Endothelial cell of umbilical vein (primary cell): ENCODE measurements at regions of chr7 and their contacts with region 1.

Region 1: DNA sequence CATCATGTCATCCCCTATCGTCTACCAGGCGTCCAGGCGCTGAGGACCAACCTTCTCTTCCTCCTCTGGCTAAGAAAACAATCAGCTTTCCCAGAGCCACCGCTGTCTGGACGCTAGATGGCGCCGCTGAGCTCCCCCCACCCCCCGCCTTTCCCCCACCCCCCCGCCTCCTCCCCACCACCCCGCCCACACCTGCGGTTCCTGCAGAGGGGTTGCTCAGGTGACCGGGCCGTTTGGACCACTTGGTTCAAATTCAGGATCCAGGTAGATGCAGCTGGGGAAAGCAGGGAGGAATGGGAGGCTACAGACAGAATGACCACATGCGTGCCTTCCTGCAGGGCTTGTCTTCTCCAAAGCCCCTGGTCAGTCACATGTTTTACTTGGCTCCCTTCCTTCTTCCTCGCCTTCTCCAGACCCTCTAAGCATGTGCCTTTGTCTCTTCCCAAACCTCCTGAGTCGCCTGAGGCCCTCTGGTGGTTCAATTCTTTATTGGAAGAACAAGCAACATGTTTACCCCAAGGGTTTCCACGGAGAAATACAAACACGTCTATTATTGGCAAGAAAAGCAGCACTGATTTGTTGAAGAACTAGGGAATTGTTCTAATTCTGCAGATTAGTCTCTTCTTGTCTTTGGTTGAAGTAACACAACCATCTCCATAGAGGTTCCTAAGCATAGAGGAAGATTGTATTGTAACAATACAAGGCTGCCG is 24.7 kb downstream of the AOC1 start:
- DNase-seq: peak; percentile 89
- H3K4me3 ChIP-seq: no peak overlapping the region
- H3K27ac ChIP-seq: no peak overlapping the region
- H3K4me1 ChIP-seq: peaks cover 10% of the 10 kb centered on the region
- H3K27me3 ChIP-seq: peaks cover 8 to 50% of the 10 kb centered on the region in 2 experiments
- CTCF ChIP-seq: peak; percentile 46 to 63
- POLR2A ChIP-seq: no peak

Region 2: DNA sequence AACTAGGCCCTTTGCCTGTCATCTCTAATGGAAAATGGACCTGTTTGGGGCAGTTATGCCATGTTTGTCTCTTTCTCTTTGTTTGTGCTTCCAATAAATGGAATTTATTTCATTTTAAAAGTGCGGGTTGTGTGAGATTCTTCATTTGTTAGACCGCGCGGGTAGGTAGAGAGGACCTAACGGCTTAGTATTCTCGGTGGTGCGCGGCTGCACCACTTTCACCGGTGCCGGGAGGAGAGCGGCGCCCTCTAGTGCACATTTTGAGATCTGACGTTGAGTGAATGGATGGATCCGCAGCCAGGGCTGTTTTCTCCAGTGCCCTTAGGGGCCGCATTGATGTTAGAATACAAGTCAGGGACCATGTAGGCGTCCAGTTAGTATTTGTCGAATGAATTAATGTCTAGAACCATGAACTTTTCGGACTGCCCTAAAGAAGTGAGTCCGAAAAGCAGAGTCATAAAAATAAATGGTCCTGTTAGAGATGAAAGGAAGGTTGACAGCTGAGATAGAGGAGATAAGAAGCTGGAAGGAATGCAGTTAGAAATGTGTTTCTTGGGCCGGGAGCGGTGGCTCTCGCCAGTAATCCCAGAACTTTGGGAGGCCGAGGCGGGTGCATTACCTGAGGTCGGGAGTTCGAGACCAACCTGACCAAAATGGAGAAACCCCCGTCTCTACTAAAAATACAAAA is 455.8 kb before region 1 on chr7:
- CTCF ChIA-PET with region 1: no interaction called
- POLR2A ChIA-PET with region 1: no interaction called
- dilution Hi-C with region 1: no loop called
- intact Hi-C with region 1: loop called (anchors 1 kb)
- DNase-seq: peak; percentile 80
- H3K4me3 ChIP-seq: no peak overlapping the region
- H3K27ac ChIP-seq: no peak overlapping the region
- H3K4me1 ChIP-seq: no peaks in the 10 kb centered on the region
- H3K27me3 ChIP-seq: no peaks in the 10 kb centered on the region
- CTCF ChIP-seq: peak; percentile 80 to 81
- POLR2A ChIP-seq: no peak

Region 3: GRCh38 chr7:150778738-150779301 is 98.2 kb before region 1 on chr7:
- CTCF ChIA-PET with region 1: interaction called, 10 read pairs
- POLR2A ChIA-PET with region 1: no interaction called
- dilution Hi-C with region 1: no loop called
- intact Hi-C with region 1: loop called (anchors 1 kb)
- DNase-seq: peak; percentile 80
- H3K4me3 ChIP-seq: no peak overlapping the region
- H3K27ac ChIP-seq: no peak overlapping the region
- H3K4me1 ChIP-seq: no peaks in the 10 kb centered on the region
- H3K27me3 ChIP-seq: peaks cover 12 to 13% of the 10 kb centered on the region in 2 experiments
- CTCF ChIP-seq: peak; percentile 80 to 90
- POLR2A ChIP-seq: no peak

Region 4: GRCh38 chr7:150860291-150860977 is 16.5 kb before region 1 on chr7:
- CTCF ChIA-PET with region 1: interaction called, 12 read pairs
- POLR2A ChIA-PET with region 1: no interaction called
- dilution Hi-C with region 1: no loop called
- intact Hi-C with region 1: no loop called
- DNase-seq: no peak
- H3K4me3 ChIP-seq: no peak overlapping the region
- H3K27ac ChIP-seq: no peak overlapping the region
- H3K4me1 ChIP-seq: no peaks in the 10 kb centered on the region
- H3K27me3 ChIP-seq: no peaks in the 10 kb centered on the region
- CTCF ChIP-seq: no peak
- POLR2A ChIP-seq: no peak

Region 5: DNA sequence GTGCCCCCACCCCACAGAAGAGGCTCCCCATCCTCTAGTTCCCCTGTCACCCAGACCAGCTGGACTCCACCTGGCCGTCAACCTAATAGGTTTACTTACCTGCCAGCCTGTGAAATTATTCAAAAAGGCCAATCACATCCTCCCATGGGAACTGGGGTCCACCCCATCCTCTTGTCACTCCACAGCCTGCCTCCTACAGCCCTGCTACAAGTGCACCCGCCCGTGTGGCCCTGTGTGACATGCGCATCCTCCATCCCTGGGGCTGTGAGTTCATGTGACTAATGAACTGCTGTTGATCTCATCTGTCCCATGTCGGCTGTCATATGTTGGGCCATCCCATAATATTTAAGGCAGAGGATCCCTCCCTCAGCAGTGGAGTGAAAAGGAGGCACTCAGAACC is 14.8 kb after region 1 on chr7:
- CTCF ChIA-PET with region 1: interaction called, 11 read pairs
- POLR2A ChIA-PET with region 1: no interaction called
- dilution Hi-C with region 1: no loop called
- intact Hi-C with region 1: no loop called
- DNase-seq: no peak
- H3K4me3 ChIP-seq: no peak overlapping the region
- H3K27ac ChIP-seq: no peak overlapping the region
- H3K4me1 ChIP-seq: no peaks in the 10 kb centered on the region
- H3K27me3 ChIP-seq: peaks cover 3 to 6% of the 10 kb centered on the region in 2 experiments
- CTCF ChIP-seq: no peak
- POLR2A ChIP-seq: no peak

Region 6: GRCh38 chr7:151408839-151409666 is 532.1 kb after region 1 on chr7:
- CTCF ChIA-PET with region 1: no interaction called
- POLR2A ChIA-PET with region 1: no interaction called
- dilution Hi-C with region 1: no loop called
- intact Hi-C with region 1: no loop called
- DNase-seq: no peak
- H3K4me3 ChIP-seq: no peak overlapping the region
- H3K27ac ChIP-seq: no peak overlapping the region
- H3K4me1 ChIP-seq: no peaks in the 10 kb centered on the region
- H3K27me3 ChIP-seq: peaks cover 43 to 53% of the 10 kb centered on the region in 2 experiments
- CTCF ChIP-seq: no peak
- POLR2A ChIP-seq: no peak